Activated CD4-positive, alpha-beta T cell treated with anti-CD3 and anti-CD28 coated beads for 36 hours (primary cell): ENCODE measurements at regions of chr20 and their contacts with region 1.

Region 1: DNA sequence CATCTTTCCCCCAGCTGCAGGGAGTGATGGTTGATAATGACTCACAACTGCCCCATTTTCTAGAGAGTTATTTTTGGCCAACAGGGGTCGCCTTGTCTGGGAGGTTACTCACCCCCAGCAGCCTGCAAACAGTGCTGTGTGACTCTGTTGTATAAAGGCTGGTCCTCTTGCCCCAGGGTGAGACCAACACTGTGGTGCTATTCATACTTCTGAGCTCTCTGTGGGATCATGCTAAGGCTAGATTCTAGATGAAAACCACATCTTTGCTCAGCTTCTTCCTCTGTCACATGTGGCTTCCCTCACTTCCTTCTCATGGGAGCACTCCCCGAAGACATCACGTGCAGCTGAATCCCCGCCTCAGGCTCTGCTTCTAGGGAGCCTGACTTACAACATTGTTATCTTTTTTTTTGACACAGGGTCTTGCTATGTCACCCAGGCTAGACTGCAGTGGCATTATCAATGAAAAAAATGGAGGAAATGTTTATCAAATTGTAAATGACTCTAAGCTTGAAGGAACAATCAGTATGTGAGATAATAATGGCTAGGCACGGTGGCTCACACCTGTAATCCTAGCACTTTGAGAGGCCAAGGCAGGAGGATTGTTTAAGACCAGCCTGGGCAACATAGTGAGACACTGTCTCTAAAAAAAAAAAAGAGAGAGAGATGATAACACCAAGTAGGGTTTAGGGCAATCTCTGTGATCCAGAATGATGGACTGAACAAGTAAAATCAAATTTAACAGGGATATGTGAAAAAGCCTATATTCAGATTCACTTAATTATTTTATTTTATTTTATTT is 55.7 kb upstream of the SLC23A2 start:
- DNase-seq: peak; percentile 84
- ATAC-seq: peak; percentile 97
- H3K4me3 Mint-ChIP-seq: no peak overlapping the region
- H3K27ac Mint-ChIP-seq: peak overlapping the region; percentile 92
- H3K4me1 Mint-ChIP-seq: peaks cover 16% of the 10 kb centered on the region
- H3K27me3 Mint-ChIP-seq: no peaks in the 10 kb centered on the region

Region 2: GRCh38 chr20:5078399-5078958 is 21.5 kb after region 1 on chr20:
- CTCF ChIA-PET with region 1: interaction called, 7 read pairs
- POLR2A ChIA-PET with region 1: no interaction called
- intact Hi-C with region 1: loop called in 1 of 2 experiments (anchors 2 kb)
- DNase-seq: peak; percentile 90
- ATAC-seq: peak; percentile 95
- H3K4me3 Mint-ChIP-seq: peak overlapping the region; percentile 58
- H3K27ac Mint-ChIP-seq: peak overlapping the region; percentile 93
- H3K4me1 Mint-ChIP-seq: peaks cover 38% of the 10 kb centered on the region
- H3K27me3 Mint-ChIP-seq: no peaks in the 10 kb centered on the region

Region 3: GRCh38 chr20:5191829-5192569 is 135.0 kb after region 1 on chr20:
- CTCF ChIA-PET with region 1: interaction called, 10 read pairs
- POLR2A ChIA-PET with region 1: no interaction called
- intact Hi-C with region 1: loop called in 1 of 2 experiments (anchors 1 kb)
- DNase-seq: peak; percentile 46
- ATAC-seq: peak; percentile 79
- H3K4me3 Mint-ChIP-seq: no peak overlapping the region
- H3K27ac Mint-ChIP-seq: peak overlapping the region; percentile 80
- H3K4me1 Mint-ChIP-seq: peaks cover 19% of the 10 kb centered on the region
- H3K27me3 Mint-ChIP-seq: no peaks in the 10 kb centered on the region